ENCODE measurements at regions of chr2 and their contacts with region 1.

Region 1: DNA sequence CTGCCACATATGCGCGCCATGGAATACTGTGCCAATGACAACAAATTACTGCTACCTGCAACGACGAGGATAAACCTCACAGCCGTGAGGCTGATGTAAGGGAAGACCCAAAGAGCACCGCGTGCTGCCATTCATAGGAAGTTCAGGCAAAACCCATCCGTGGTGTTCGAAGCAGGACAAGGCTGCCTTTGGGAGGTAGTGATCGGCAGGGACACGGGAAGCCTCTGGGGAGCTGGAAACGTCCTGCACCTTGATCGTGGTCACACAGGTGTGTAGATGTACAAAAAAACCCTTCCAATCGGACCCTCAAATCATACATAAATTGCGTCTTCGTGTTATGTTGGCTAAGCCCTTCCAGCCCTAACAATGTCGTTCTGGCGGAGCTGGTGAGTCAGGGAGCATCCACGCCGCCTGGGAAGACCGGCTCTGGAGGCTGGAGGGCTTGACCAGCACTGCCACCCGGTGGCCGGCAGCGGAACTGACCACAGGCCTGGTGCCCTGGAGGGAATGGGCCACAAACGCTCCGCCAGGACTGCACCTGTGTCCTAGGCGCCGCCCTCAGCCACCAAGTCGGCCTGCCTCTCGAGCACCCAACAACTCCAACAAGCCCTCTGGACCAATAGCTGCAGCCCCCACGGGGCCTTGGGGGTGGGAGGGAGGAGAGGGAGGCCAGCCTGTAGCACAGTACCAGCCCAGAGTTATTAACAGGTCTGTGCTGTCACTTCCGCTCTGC is 4.1 kb upstream of the NEURL3 start:
- DNase-seq: peak; percentile 79 to 87 (median 84)
- H3K4me3 ChIP-seq: no peak overlapping the region
- H3K4me3 Mint-ChIP-seq: peak overlapping the region in 1 of 2 donors; percentile 37
- H3K27ac ChIP-seq: no peak overlapping the region
- H3K27ac Mint-ChIP-seq: peak overlapping the region in 2 of 7 donors; percentile 33 to 85
- H3K4me1 ChIP-seq: peaks cover 10 to 19% of the 10 kb centered on the region in 2 donors
- H3K4me1 Mint-ChIP-seq: peaks cover 10% of the 10 kb centered on the region
- H3K27me3 ChIP-seq: peaks cover 0 to 3% of the 10 kb centered on the region in 2 donors
- H3K27me3 Mint-ChIP-seq: peaks cover 7 to 13% (median 9%) of the 10 kb centered on the region in 3 donors
- CTCF ChIP-seq: peak; percentile 93

Region 2: DNA sequence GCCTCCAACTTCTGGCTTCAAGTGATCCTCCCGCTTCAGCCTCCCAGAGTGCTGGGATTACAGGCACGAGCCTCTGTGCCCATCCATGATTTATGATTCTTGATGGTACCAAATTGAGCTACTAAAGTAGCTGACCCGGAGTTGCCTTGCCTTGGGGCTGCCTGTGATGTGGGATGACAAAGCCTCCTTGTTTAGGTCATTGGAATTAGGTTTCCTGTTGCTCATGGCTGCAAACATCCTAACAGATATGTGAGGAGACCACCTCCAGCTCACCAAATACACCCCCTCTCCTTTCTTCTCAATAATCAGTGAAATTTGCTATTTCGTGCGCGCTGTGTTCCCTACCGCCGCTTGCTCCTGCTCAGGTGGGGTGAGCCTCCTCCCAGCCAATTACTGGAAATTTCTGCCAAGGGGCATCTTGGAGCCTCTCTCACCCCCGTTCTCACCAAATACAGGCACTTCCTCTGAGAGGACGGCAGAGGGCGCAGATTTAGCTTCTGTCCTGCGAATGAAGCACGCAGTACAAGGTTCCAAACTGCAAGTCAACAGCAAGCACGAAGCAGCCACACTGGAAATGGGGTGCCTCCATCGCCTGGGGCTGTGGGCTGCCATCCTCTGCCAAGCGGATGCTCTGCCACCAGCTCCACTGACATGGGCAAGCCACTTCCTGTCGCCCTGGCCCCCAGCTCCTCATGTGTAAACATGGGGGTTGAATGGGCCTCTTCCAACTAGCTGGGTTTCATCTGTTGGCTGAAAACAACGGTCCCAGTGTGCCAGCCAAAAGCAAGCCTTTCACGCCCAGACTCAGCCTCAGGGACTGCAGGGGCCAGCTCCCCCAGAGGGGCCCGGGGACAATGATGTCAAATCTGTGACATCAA is 102.0 kb before region 1 on chr2:
- intact Hi-C with region 1: loop called (anchors 1 to 2 kb)
- DNase-seq: peak; percentile 62 to 72 (median 68)
- H3K4me3 ChIP-seq: peak overlapping the region in 1 of 3 experiments; percentile 18
- H3K4me3 Mint-ChIP-seq: peak overlapping the region in 1 of 2 donors; percentile 16
- H3K27ac ChIP-seq: no peak overlapping the region
- H3K27ac Mint-ChIP-seq: no peak overlapping the region
- H3K4me1 ChIP-seq: peaks cover 4 to 6% of the 10 kb centered on the region in 2 donors
- H3K4me1 Mint-ChIP-seq: peaks cover 7% of the 10 kb centered on the region
- H3K27me3 ChIP-seq: no peaks in the 10 kb centered on the region
- H3K27me3 Mint-ChIP-seq: peaks cover 3 to 10% (median 4%) of the 10 kb centered on the region in 3 donors
- CTCF ChIP-seq: peak; percentile 85

Region 3: DNA sequence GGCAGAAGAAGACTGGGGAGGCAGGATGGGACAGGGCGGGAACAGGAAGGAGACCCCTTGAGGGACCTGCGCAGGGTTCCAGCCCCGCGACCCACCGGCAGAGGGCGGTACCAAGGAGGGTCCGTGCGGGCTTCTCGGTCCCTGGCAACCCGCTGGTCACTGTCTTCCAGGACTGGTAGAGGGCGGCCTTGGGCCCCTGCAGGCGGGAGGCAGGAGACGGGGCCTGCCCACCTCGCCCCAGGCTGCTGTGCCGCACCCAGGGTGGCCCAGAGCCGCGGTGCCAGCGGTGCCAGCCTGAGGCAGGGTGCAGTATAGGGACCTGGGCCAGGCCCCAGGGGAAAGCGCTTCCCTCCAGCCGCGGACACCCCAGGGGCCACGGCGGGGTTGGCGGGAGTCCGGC is 38.6 kb before region 1 on chr2:
- intact Hi-C with region 1: loop called (anchors 2 to 5 kb)
- DNase-seq: peak; percentile 23 to 63 (median 43)
- H3K4me3 ChIP-seq: no peak overlapping the region
- H3K4me3 Mint-ChIP-seq: peak overlapping the region; percentile 0 to 43
- H3K27ac ChIP-seq: no peak overlapping the region
- H3K27ac Mint-ChIP-seq: no peak overlapping the region
- H3K4me1 ChIP-seq: peaks cover 13 to 18% of the 10 kb centered on the region in 2 donors
- H3K4me1 Mint-ChIP-seq: peaks cover 10% of the 10 kb centered on the region
- H3K27me3 ChIP-seq: peaks cover 0 to 5% of the 10 kb centered on the region in 2 donors
- H3K27me3 Mint-ChIP-seq: peaks cover 5 to 13% (median 12%) of the 10 kb centered on the region in 3 donors
- CTCF ChIP-seq: peak; percentile 83

Measured in CD14-positive monocyte (primary cell).